ENCODE measurements at regions of chr1 and their contacts with region 1.

Region 1: DNA sequence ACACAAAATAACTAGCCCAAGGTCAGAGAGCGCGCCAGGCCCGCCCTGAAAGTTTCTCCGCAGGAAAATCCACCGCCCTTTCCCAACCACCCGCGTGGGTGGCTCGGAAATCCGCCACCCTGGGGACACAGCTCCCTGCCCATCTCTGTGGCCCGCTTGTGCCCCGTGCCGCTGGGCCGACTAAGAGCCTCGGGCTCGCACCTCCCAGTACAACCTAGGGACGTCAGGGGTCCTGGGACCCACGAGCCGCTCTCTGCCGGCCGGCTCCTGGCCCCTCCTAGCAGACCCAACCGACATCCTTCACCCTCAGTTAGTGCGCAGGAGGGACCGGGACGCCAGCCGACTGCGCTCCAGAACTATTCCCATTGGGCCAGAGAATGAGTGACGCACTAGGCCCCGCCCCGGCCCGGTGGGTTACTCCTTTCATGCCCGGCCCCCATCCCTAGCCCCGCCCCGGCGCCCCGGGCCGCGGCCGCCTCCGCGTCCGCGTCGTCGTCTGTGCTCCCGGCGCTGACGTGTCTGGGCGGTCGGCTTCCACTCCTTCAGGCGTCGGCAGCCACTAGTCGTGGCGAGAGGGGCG is 395 bp upstream of the UAP1 start:
- DNase-seq: peak; percentile 98
- H3K4me3 Mint-ChIP-seq: peak overlapping the region; percentile 92
- H3K27ac Mint-ChIP-seq: peak overlapping the region; percentile 91
- H3K4me1 Mint-ChIP-seq: peaks cover 35% of the 10 kb centered on the region
- H3K27me3 Mint-ChIP-seq: no peaks in the 10 kb centered on the region

Region 2: GRCh38 chr1:162069328-162070093 is 491.6 kb before region 1 on chr1 and contains the start of gene NOS1AP:
- CTCF ChIA-PET with region 1: no interaction called
- intact Hi-C with region 1: loop called (anchors 2 kb)
- DNase-seq: peak; percentile 84
- H3K4me3 Mint-ChIP-seq: peak within 1 kb of the TSS; percentile 78
- H3K27ac Mint-ChIP-seq: no peak within 1 kb of the TSS
- H3K4me1 Mint-ChIP-seq: peaks cover 1% of the 10 kb centered on the region
- H3K27me3 Mint-ChIP-seq: peaks cover 50% of the 10 kb centered on the region
- total RNA-seq, gene NOS1AP: 0.33 to 0.42 TPM

Region 3: GRCh38 chr1:162117039-162117774 is 443.9 kb before region 1 on chr1:
- CTCF ChIA-PET with region 1: no interaction called
- intact Hi-C with region 1: no loop called
- DNase-seq: no peak
- H3K4me3 Mint-ChIP-seq: no peak overlapping the region
- H3K27ac Mint-ChIP-seq: no peak overlapping the region
- H3K4me1 Mint-ChIP-seq: no peaks in the 10 kb centered on the region
- H3K27me3 Mint-ChIP-seq: peaks cover 18% of the 10 kb centered on the region

Region 4: DNA sequence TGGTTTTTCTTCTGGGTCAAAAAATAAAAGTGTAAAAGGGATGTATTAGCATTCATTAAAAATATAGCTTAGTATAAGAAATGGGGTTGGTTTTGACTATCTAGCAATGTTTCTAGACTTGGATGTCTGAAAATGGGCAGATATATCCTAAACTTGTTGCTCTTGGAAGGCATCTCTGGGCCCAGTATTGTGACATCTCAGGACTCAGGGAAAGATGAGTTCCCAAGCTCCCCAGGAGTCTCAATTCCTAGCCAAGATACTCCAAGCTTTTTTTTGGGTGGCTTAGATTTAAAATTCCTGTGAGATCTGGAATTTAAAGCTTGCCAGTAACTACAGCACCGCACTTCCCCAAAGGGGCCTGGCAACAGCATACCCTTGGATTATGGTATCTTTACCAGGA is 217.9 kb after region 1 on chr1:
- CTCF ChIA-PET with region 1: no interaction called
- intact Hi-C with region 1: no loop called
- DNase-seq: no peak
- H3K4me3 Mint-ChIP-seq: no peak overlapping the region
- H3K27ac Mint-ChIP-seq: no peak overlapping the region
- H3K4me1 Mint-ChIP-seq: no peaks in the 10 kb centered on the region
- H3K27me3 Mint-ChIP-seq: peaks cover 5% of the 10 kb centered on the region